Heart left ventricle (tissue), 16 donors: ENCODE measurements at regions of chr7 and their contacts with region 1.

Region 1: DNA sequence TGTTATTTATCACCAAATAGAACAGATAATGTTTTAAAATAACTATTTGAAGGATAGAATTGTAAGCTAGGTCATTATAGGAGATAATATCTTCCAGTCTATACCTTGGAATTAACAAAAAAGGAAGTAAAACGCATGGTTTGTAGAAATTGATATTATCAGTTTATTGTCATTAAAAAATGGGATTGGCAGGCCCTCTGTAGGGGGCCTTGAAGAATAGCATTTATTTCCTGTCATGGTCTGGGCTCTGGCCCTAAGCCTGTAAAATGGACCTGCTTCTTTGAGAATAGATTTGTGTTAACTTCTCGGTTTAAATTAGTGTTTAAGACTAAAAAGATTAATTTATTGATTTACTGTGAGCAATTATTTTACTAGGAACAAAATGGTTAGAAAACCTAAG is 197.6 kb upstream of the FOXP2 start:
- DNase-seq: no peak
- ATAC-seq: no peak
- H3K4me3 ChIP-seq: no peak overlapping the region
- H3K27ac ChIP-seq: no peak overlapping the region
- H3K4me1 ChIP-seq: no peaks in the 10 kb centered on the region
- H3K27me3 ChIP-seq: no peaks in the 10 kb centered on the region
- CTCF ChIP-seq: no peak
- POLR2A ChIP-seq: no peak

Region 2: DNA sequence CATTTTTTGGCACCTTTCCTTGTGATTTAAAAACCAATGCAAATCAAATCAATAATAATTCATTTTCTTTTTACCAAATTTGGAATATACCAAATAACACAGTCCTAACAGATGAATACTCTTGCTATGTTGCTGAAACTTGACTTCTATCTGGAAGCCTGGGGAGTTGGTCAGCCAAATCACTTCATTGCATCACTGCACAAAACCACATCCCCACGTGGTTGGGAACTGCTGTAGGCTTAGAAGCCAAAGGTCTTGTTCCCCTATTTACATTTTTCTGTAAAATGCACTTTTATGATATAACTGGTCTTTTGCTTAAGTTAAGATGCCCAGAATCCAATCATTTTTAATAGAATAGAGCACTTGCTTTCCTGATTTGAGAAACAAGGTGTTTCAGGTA is 1145.6 kb before region 1 on chr7:
- intact Hi-C with region 1: no loop called
- DNase-seq: no peak
- ATAC-seq: no peak
- H3K4me3 ChIP-seq: no peak overlapping the region
- H3K27ac ChIP-seq: no peak overlapping the region
- H3K4me1 ChIP-seq: peaks cover 0 to 3% (median 0%) of the 10 kb centered on the region in 12 donors
- H3K27me3 ChIP-seq: peaks cover 0 to 1% (median 0%) of the 10 kb centered on the region in 9 donors
- CTCF ChIP-seq: no peak
- POLR2A ChIP-seq: no peak

Region 3: DNA sequence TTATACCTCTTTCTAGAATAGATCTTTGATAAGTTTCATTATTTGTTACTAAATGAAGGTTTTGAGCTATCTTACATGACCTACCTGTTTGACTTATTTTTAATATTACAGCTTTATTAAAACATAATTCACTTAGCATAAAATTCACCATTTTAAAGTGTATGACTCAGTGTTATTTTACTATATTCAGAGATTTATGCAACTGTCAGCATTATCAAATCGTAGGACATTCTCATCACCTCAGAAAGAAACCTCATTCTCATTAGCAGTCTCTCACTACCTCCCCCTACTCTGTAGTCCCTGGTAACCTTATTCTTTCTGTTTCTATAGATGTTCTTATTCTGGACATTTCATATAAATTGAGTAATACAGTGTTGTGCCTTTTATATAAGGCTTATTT is 10.3 kb before region 1 on chr7:
- intact Hi-C with region 1: loop called in 1 of 10 experiments (anchors 1 kb)
- DNase-seq: no peak
- ATAC-seq: no peak
- H3K4me3 ChIP-seq: no peak overlapping the region
- H3K27ac ChIP-seq: no peak overlapping the region
- H3K4me1 ChIP-seq: no peaks in the 10 kb centered on the region
- H3K27me3 ChIP-seq: no peaks in the 10 kb centered on the region
- CTCF ChIP-seq: no peak
- POLR2A ChIP-seq: no peak

Region 4: GRCh38 chr7:114279901-114280300 is 62.9 kb after region 1 on chr7:
- intact Hi-C with region 1: no loop called
- DNase-seq: no peak
- ATAC-seq: no peak
- H3K4me3 ChIP-seq: no peak overlapping the region
- H3K27ac ChIP-seq: no peak overlapping the region
- H3K4me1 ChIP-seq: no peaks in the 10 kb centered on the region
- H3K27me3 ChIP-seq: no peaks in the 10 kb centered on the region
- CTCF ChIP-seq: no peak
- POLR2A ChIP-seq: no peak